ENCODE measurements at regions of chr22 and their contacts with region 1.

Region 1: GRCh38 chr22:36977947-36978660 is 41.1 kb downstream of the TST start:
- DNase-seq: peak; percentile 85 to 88 (median 88)
- ATAC-seq: peak; percentile 80
- H3K4me3 ChIP-seq: peak overlapping the region; percentile 32
- H3K27ac ChIP-seq: no peak overlapping the region
- H3K4me1 ChIP-seq: peaks cover 25 to 34% of the 10 kb centered on the region in 2 experiments; a peak in 4 of 5 replicates
- H3K27me3 ChIP-seq: no peaks in the 10 kb centered on the region; a peak in 1 of 5 replicates
- CTCF ChIP-seq: peak; percentile 82 to 86 (median 83)
- EP300 ChIP-seq: no peak
- POLR2A ChIP-seq: no peak
- RAD21 ChIP-seq: peak; percentile 70 to 79

Region 2: DNA sequence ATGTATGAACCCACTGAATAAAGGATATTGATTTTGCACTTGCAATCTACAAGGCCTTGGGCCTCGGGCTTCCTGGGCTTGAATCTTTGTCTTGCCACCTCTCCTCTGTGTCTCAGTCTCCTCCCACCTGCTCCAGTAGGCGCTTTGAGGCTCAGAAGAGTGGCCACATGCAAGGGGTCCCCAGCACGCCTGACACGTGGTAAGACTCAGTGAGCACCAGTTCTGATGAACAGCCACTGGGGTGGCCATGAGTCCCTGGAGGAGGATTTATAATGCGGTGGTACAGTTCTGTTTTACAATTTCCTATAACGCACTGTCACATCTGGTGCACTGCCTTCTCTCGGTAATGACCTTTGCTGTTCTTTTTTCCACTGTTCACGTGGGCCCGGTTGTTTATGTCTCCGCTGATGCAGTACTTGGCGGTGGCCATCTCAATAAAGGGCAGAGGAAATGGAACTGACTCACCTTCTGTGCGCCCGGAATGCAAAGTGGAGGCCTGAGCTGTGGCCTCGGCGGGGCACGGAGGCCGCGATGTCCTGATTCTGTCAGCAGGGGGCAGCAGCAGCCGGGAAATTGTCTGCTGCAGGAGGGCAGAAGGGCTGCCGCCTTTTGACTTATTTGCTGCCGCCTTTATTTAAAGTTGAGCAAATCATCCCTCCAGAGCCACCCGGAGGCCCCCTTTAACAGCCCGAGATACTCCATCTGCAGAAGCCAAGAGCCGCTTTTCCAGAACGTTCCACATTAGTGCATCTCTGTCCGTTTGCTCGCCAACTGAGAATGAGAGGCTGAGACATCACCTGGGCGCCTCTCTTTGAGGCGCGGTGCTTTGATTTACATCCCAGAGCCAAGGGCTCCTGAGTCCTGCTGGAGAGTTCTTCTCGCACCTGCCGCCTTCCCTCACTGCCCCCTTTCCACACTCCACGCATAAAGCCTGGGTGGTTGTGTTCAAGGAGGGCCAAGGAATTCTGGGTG is 196.2 kb before region 1 on chr22:
- CTCF ChIA-PET with region 1: interaction called, 7 read pairs
- POLR2A ChIA-PET with region 1: interaction called, 4 read pairs
- in situ Hi-C with region 1: no loop called
- intact Hi-C with region 1: loop called (anchors 5 kb)
- DNase-seq: peak; percentile 64 to 77 (median 75)
- ATAC-seq: peak; percentile 90
- H3K4me3 ChIP-seq: no peak overlapping the region
- H3K27ac ChIP-seq: no peak overlapping the region
- H3K4me1 ChIP-seq: no peaks in the 10 kb centered on the region; a peak in 1 of 5 replicates
- H3K27me3 ChIP-seq: peaks cover under 1 to 41% of the 10 kb centered on the region in 2 experiments; a peak in 4 of 5 replicates
- CTCF ChIP-seq: peak; percentile 79 to 85 (median 81)
- EP300 ChIP-seq: no peak
- POLR2A ChIP-seq: no peak
- RAD21 ChIP-seq: peak; percentile 73 to 80

Region 3: DNA sequence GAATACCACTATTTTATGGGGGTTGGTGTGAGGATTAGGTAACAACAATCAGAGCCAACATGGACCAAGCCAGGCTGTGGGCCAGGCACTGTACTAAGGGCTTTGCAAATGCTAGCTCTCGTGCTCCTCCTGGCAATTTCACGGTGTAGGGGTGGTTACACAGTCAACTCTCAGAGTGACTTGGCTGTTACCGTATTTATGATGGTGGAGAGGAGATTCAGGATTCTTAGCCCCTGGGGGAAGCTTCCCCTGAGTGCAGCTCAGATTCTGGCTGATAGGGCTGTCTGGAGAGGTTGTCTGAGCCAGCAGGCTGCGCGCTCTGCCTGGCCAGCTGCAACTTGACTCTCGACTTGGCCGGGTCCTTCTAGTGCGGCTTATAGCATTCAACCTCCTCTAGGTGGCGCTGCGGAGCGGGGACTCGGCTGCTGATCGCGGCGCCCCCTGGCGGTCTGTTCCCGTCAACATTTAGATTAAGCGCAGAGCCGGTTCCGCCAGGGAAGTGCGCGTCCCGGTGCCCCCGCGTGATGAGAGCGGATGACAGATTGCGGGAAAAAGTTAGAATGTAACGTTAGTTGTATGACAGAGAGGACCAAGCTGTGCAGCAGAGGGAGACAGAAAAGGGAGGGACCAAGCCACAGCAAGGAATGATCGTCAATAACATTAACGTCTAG is 121.8 kb before region 1 on chr22:
- CTCF ChIA-PET with region 1: interaction called, 10 read pairs
- POLR2A ChIA-PET with region 1: no interaction called
- in situ Hi-C with region 1: no loop called
- intact Hi-C with region 1: loop called (anchors 5 kb)
- DNase-seq: peak; percentile 77 to 88 (median 77)
- ATAC-seq: peak; percentile 96
- H3K4me3 ChIP-seq: no peak overlapping the region
- H3K27ac ChIP-seq: no peak overlapping the region
- H3K4me1 ChIP-seq: peaks cover 0 to 12% of the 10 kb centered on the region in 2 experiments; a peak in 3 of 5 replicates
- H3K27me3 ChIP-seq: peaks cover 0 to 6% of the 10 kb centered on the region in 2 experiments; a peak in 1 of 5 replicates
- CTCF ChIP-seq: peak; percentile 99 to 100 (median 100)
- EP300 ChIP-seq: 0 out of 2 replicates have a peak, but pooled peaks have one; percentile 42
- POLR2A ChIP-seq: no peak
- RAD21 ChIP-seq: peak; percentile 79 to 84

Region 4: GRCh38 chr22:36873680-36874537 is 104.2 kb before region 1 on chr22:
- CTCF ChIA-PET with region 1: no interaction called
- POLR2A ChIA-PET with region 1: no interaction called
- in situ Hi-C with region 1: no loop called
- intact Hi-C with region 1: loop called (anchors 5 kb)
- DNase-seq: peak; percentile 15 to 37 (median 20)
- ATAC-seq: peak; percentile 84
- H3K4me3 ChIP-seq: no peak overlapping the region
- H3K27ac ChIP-seq: no peak overlapping the region
- H3K4me1 ChIP-seq: 0 out of 5 replicates have a peak, but pooled peaks cover 0 to 2% of the 10 kb centered on the region in 2 experiments
- H3K27me3 ChIP-seq: peaks cover 4 to 26% of the 10 kb centered on the region in 2 experiments; a peak in 3 of 5 replicates
- CTCF ChIP-seq: peak; percentile 45 to 54 (median 48); a peak in 5 of 6 replicates
- EP300 ChIP-seq: no peak
- POLR2A ChIP-seq: no peak
- RAD21 ChIP-seq: peak; percentile 32 to 42; a peak in 3 of 4 replicates

Region 5: DNA sequence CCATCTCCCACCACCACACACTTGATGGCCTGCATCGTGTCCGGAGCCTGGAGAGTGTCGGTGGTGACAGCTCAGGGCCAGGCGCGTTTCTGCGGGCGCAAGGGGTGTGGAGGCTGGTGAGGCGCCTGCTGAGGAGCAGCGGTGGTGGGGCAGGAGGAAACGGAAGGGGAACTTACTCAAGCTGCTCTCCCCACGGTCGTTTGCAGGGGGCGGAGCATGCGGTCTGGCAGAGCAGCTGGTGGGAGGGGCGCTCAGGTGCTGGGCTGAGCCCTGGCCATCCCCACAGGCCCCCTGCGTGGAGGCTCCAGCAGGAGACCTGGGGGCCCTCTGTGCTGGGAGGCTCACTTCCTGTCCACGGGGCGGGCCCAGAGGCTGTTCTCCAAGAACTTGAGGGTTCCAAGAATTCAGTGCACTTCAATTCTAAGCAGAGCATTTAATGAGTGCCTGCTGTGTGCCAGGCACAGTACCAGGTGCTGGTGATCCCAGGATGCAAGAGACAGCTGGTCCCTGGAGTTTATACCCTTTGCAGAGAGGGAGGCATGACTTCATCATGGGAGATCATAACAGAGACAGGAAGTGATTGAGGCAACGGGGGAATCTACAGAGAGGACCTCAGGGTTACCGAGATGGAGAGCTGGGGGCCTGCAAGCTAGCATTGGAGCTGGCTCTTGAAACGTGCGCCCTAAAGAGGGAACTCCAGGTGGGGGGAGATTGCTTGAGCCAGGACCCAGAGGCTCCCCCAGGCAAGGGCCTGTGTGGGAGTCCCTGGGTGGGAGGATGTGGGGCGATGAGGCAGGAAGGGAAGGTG is 266.2 kb after region 1 on chr22 and contains the start of gene RAC2:
- CTCF ChIA-PET with region 1: no interaction called
- POLR2A ChIA-PET with region 1: no interaction called
- in situ Hi-C with region 1: no loop called
- intact Hi-C with region 1: no loop called
- DNase-seq: peak; percentile 77 to 91 (median 84)
- ATAC-seq: peak; percentile 79
- H3K4me3 ChIP-seq: peak within 1 kb of the TSS; percentile 76
- H3K27ac ChIP-seq: peak within 1 kb of the TSS; percentile 88
- H3K4me1 ChIP-seq: peaks cover 29 to 49% of the 10 kb centered on the region in 2 experiments
- H3K27me3 ChIP-seq: no peaks in the 10 kb centered on the region
- CTCF ChIP-seq: no peak
- EP300 ChIP-seq: 0 out of 2 replicates have a peak, but pooled peaks have one; percentile 10
- POLR2A ChIP-seq: peak; percentile 78
- RAD21 ChIP-seq: no peak
- polyA plus RNA-seq, gene RAC2: 25.4 to 26.8 TPM

Measured in K562 (cell line).